ENCODE measurements at regions of chr9 and their contacts with region 1.

Region 1: DNA sequence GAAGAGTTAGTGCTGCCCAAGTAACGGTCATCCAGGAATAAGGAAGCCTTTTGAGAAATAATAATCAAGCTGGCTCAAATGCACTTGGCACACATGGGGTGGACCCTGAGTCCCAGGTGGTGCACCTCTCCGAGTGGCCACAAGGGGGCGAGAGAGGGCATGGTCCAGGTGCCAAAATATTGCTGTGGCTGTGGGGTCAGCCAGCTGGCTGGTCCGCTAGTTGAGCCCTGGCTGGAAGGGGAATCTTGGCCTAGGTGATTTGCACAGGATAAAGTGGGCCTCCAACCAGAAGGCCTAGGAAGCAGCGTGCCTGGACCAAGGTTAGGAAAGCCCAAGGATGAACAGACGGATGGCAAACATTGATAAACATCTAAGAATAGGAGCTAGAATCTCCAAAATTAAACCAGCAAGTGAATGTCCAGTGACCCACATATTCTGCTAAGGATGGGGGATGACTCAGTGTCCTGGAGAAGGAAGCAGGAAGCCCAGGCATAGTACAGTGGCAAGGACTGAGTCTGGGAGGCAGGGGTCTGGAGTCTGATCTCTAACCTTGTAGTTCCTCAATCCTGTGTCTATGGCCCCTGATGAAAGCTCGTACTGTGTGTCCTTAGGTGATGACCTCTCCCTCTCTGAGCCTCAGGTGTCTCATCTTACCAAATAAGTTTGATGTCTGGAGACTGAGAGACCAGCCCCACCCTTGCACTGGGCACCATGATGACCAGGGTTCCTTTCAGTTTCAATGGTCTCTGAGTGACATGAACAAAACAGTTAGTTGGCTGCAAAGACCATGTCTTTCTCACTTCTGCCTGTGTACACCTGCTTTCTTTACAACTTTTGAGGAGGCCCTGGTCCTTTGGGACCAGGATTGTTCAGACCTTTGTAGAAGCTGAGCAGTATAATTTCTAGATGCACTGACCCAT is 19.2 kb upstream of the SHB start:
- DNase-seq: peak; percentile 84
- H3K4me3 ChIP-seq: no peak overlapping the region
- H3K27ac ChIP-seq: no peak overlapping the region
- H3K4me1 ChIP-seq: no peaks in the 10 kb centered on the region
- H3K27me3 ChIP-seq: no peaks in the 10 kb centered on the region
- CTCF ChIP-seq: peak; percentile 98

Region 2: DNA sequence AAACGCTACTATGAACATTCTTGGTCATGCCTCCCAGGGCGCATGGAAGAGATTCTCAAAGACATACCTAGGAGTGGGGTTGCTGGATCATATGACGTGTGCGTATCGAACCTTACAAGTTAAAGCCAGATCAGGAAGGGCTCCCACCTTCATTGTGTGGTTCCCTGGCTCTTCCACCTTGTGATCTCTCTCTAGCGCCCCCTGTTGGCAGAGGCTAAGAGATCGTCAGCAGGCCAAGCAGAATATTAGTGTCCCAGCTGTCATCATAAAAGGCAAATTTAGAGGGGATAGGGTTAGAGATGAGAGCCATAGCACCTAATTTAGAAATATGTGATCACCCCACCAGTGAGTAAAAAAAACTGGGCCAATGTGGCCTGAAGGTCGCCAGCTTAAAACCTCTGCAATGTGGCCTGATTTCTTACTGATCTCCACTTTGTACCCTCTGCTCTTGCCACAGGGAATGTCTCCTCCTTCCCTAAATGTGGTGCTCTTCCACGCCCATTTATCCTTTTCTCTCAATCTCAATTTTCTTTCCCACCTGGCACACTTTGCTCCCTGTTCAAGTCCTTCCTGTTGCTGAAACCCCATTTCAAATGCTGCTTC is 72.4 kb after region 1 on chr9:
- intact Hi-C with region 1: loop called (anchors 10 kb)
- DNase-seq: peak; percentile 77
- H3K4me3 ChIP-seq: no peak overlapping the region
- H3K27ac ChIP-seq: no peak overlapping the region
- H3K4me1 ChIP-seq: no peaks in the 10 kb centered on the region
- H3K27me3 ChIP-seq: no peaks in the 10 kb centered on the region
- CTCF ChIP-seq: peak; percentile 80